A549 (cell line): ENCODE measurements at regions of chr9 and their contacts with region 1.

Region 1: DNA sequence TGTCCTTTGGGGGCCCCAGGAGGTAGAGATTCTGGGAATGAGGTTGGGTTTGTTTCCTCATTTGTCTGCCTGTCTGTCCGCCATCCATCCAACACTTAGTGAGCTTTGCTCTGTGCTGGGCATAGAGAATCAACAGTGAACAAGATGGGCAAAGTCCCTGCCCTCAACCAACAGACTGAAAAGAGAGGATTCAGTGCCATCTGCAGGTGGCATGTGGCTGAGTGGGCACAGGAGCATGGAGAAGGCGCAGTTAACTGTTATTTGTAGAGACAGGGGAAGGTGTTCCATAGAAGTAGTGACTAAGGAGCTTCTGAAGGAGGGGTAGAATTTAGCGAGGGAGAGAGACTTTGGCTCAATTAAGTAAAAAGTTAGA is 23.1 kb downstream of the POLR1E start:
- DNase-seq: no peak
- ATAC-seq: peak; percentile 37 to 52; a peak in 3 of 6 replicates
- H3K4me3 ChIP-seq: no peak overlapping the region
- H3K27ac ChIP-seq: no peak overlapping the region
- H3K4me1 ChIP-seq: no peaks in the 10 kb centered on the region
- CTCF ChIP-seq: peak; percentile 20; the same call in 1 of the 3 replicates
- EP300 ChIP-seq: no peak
- POLR2A ChIP-seq: no peak
- RAD21 ChIP-seq: peak; percentile 29 to 45; a peak in 3 of 5 replicates

Region 2: DNA sequence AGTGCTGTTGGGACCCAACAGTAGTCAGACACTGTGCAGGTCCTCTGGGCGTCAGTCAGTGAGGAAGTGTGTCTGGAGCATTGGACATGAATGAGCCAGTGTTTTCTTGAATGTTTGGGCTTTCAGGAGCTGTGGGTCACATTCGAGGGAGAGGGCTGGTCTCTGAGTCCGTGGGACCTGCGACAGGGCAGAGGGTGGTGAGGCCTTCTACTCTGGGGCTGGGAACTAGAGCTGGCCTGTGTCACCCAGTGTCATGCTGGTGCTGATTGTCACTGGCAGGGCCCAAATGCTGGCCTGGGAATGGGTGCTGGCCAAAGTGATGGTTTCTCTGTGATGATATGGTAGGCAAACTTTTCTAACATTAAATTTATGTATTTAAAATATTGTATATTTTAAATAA is 12.8 kb before region 1 on chr9:
- CTCF ChIA-PET with region 1: interaction called, 14 read pairs
- POLR2A ChIA-PET with region 1: no interaction called
- DNase-seq: no peak
- ATAC-seq: no peak
- H3K4me3 ChIP-seq: no peak overlapping the region
- H3K27ac ChIP-seq: no peak overlapping the region
- H3K4me1 ChIP-seq: no peaks in the 10 kb centered on the region
- CTCF ChIP-seq: no peak
- EP300 ChIP-seq: no peak
- POLR2A ChIP-seq: no peak
- RAD21 ChIP-seq: no peak